ENCODE measurements at regions of chr4 and their contacts with region 1.

Region 1: DNA sequence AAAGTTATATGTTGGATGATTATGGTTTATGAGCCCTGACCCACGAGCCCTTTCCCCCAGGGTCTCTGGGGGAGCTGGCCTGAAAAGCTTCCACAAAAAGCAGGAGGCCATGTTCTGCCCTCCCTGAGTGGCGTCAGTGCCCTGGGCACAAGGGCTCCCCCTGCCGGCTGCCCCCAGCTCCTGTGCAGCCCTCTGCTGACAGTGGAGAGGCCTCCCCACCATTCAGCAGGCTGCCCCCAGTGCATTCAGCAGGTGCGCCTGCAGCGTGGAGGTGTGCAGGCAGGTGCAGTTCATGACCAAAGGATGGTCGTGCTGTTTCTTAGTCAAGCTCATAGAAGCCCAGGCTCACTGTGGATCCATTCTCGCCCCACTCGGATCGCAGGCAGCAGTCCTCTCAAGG is 12.5 kb upstream of the S100P start:
- DNase-seq: peak; percentile 52 to 66 (median 58)
- ATAC-seq: peak; percentile 76
- H3K4me3 ChIP-seq: no peak overlapping the region
- H3K27ac ChIP-seq: no peak overlapping the region
- H3K4me1 ChIP-seq: peaks cover 18 to 30% of the 10 kb centered on the region in 2 experiments
- H3K27me3 ChIP-seq: no peaks in the 10 kb centered on the region
- CTCF ChIP-seq: peak; percentile 79 to 89 (median 88)
- EP300 ChIP-seq: no peak
- POLR2A ChIP-seq: no peak
- RAD21 ChIP-seq: peak in 1 of 2 experiments; percentile 61; a peak in 3 of 4 replicates

Region 2: DNA sequence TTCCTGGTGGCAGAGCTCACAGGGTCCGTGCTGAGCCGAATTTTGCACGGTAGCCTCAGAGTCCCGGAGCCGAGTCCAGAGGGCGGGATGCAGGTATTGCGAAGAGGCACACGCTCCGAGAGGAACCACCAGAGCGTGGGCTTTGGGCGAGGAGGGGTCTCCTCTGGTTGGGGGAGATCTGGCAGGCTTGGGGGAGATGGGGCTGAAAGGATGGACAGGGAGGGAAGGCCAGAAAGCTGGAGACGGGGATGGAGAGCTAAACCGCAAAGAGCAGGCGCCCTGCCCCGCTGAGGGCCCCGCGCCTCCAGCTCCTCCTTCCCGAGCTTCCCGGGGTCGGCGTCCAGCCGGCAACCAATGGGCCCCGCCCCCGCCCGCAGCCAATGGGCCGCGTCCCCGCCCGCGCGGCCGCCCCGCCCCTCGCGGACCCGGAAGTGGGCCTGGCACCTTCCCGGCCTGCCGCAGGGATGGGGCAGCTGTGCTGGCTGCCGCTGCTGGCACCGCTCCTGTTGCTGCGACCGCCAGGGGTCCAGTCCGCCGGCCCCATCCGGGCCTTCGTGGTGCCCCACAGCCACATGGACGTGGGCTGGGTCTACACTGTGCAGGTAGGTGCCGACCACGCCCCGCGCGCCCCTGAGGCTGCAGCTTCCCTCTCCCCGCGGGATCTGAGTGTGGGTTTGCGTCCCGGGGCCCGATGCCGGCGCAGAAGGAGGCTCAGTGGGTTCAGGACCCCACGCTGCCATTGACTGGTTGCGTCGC is 106.3 kb before region 1 on chr4 and contains the start of gene MAN2B2:
- CTCF ChIA-PET with region 1: no interaction called
- POLR2A ChIA-PET with region 1: no interaction called
- in situ Hi-C with region 1: no loop called
- intact Hi-C with region 1: loop called (anchors 5 kb)
- DNase-seq: peak; percentile 89 to 99 (median 98)
- ATAC-seq: peak; percentile 97
- H3K4me3 ChIP-seq: peak within 1 kb of the TSS; percentile 97
- H3K27ac ChIP-seq: peak within 1 kb of the TSS; percentile 58
- H3K4me1 ChIP-seq: peaks cover 3 to 31% of the 10 kb centered on the region in 2 experiments; a peak in 4 of 5 replicates
- H3K27me3 ChIP-seq: peaks cover 0 to 22% of the 10 kb centered on the region in 2 experiments; a peak in 3 of 5 replicates
- CTCF ChIP-seq: no peak
- EP300 ChIP-seq: no peak
- POLR2A ChIP-seq: peak; percentile 85
- RAD21 ChIP-seq: no peak
- polyA plus RNA-seq, gene MAN2B2: 0.21 to 0.27 TPM

Region 3: DNA sequence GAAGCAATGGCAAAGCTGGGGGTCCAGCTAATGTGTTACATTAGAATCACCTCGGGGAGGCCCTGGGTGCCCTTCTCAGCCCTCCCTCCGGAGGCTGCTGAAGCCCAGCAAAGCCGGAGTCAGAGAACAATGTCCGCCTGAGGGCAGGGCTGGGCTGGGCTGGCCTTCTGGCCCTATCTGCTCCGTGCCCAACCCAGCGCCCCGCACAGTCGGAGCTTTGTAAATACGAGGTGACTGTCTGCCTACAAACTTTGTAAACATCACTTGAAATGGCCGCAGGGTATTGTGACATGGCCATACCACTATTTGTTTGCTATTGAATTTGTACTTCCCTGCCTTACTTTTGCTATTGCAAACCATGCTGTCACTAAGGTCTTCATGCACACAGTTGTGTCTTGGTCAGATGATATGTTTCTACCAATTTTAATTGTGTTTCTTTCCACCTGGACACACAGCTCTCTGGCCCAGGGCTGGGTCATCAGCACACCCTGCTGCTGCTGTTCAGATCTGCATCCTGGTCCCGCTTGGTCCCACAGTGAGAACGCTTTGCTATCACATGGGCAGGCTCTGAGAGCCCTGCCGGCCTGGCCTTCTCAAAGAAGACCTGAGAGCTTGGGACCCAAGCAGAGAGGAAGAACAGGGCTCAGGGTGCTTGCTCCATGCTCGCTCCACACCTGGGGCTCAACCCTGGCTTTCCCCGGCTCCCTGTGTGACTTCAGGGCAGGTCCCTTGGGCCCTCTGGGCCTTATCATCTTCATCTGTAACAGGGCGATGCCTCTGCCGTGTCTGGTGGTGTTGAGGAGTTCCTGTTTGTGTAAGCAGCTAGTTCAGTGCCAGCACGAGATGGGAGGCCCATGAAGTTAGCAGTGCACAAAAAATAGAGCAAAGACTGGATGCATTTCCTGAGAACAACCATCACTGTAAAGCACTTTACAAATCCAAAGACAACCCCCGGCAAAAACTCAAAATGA is 14.8 kb after region 1 on chr4:
- CTCF ChIA-PET with region 1: no interaction called
- POLR2A ChIA-PET with region 1: interaction called, 38 read pairs
- in situ Hi-C with region 1: no loop called
- intact Hi-C with region 1: no loop called
- DNase-seq: no peak
- ATAC-seq: peak; percentile 62
- H3K4me3 ChIP-seq: no peak overlapping the region
- H3K27ac ChIP-seq: peak overlapping the region; percentile 2; the same call in 2 of the 3 replicates
- H3K4me1 ChIP-seq: peaks cover 40 to 49% of the 10 kb centered on the region in 2 experiments
- H3K27me3 ChIP-seq: no peaks in the 10 kb centered on the region
- CTCF ChIP-seq: peak; percentile 34 to 42 (median 40); a peak in 4 of 6 replicates
- EP300 ChIP-seq: no peak
- POLR2A ChIP-seq: no peak
- RAD21 ChIP-seq: peak; percentile 12 to 46; a peak in 2 of 4 replicates